ENCODE measurements at regions of chr1 and their contacts with region 1.

Region 1: DNA sequence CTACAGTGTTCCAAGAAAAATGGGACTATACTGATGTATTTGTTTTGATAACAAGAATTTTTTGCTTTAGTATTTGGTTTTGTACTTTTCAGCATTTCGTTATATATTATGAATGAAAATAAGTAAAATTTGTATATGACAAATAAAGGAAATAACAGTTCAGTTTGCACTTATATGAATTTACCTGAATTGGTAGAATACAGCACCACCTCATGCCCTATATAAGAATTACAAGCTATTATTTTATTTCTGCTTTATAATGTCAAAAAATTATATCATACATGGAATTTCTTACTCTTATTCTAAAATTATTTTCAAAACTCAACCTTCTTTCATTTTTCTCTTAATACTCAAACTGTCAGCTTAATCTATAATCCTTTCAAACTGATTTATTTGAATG is 14.6 kb downstream of the EFCAB7 start:
- DNase-seq: no peak
- ATAC-seq: no peak
- H3K4me3 ChIP-seq: no peak overlapping the region
- H3K27ac ChIP-seq: no peak overlapping the region
- H3K4me1 ChIP-seq: peaks cover 6% of the 10 kb centered on the region; the same call in 1 of the 2 replicates
- H3K27me3 ChIP-seq: no peaks in the 10 kb centered on the region
- CTCF ChIP-seq: no peak
- EP300 ChIP-seq: no peak
- POLR2A ChIP-seq: no peak
- RAD21 ChIP-seq: no peak

Region 2: GRCh38 chr1:62962901-62963776 is 574.8 kb before region 1 on chr1:
- CTCF ChIA-PET with region 1: no interaction called
- POLR2A ChIA-PET with region 1: no interaction called
- in situ Hi-C with region 1: no loop called
- intact Hi-C with region 1: loop called (anchors 5 kb)
- DNase-seq: peak; percentile 30
- ATAC-seq: peak; percentile 96
- H3K4me3 ChIP-seq: no peak overlapping the region
- H3K27ac ChIP-seq: no peak overlapping the region
- H3K4me1 ChIP-seq: no peaks in the 10 kb centered on the region
- H3K27me3 ChIP-seq: no peaks in the 10 kb centered on the region
- CTCF ChIP-seq: peak; percentile 79
- EP300 ChIP-seq: no peak
- POLR2A ChIP-seq: no peak
- RAD21 ChIP-seq: 0 out of 2 replicates have a peak, but pooled peaks have one; percentile 33

Region 3: GRCh38 chr1:63004868-63005267 is 533.1 kb before region 1 on chr1:
- CTCF ChIA-PET with region 1: no interaction called
- POLR2A ChIA-PET with region 1: no interaction called
- in situ Hi-C with region 1: loop called (anchors 25 kb)
- intact Hi-C with region 1: no loop called
- DNase-seq: peak; percentile 3
- ATAC-seq: peak; percentile 61; the same call in 2 of the 3 replicates
- H3K4me3 ChIP-seq: no peak overlapping the region
- H3K27ac ChIP-seq: no peak overlapping the region
- H3K4me1 ChIP-seq: no peaks in the 10 kb centered on the region
- H3K27me3 ChIP-seq: peaks cover 1 to 8% of the 10 kb centered on the region in 2 experiments; a peak in 3 of 5 replicates
- CTCF ChIP-seq: peak; percentile 61
- EP300 ChIP-seq: no peak
- POLR2A ChIP-seq: no peak
- RAD21 ChIP-seq: 0 out of 2 replicates have a peak, but pooled peaks have one; percentile 12

Region 4: GRCh38 chr1:63316984-63317816 is 220.7 kb before region 1 on chr1:
- CTCF ChIA-PET with region 1: interaction called, 5 read pairs
- POLR2A ChIA-PET with region 1: no interaction called
- in situ Hi-C with region 1: no loop called
- intact Hi-C with region 1: loop called (anchors 5 kb)
- DNase-seq: peak; percentile 41
- ATAC-seq: peak; percentile 95
- H3K4me3 ChIP-seq: peak overlapping the region; percentile 64 to 73 (median 67)
- H3K27ac ChIP-seq: no peak overlapping the region
- H3K4me1 ChIP-seq: peaks cover 8% of the 10 kb centered on the region; the same call in 1 of the 2 replicates
- H3K27me3 ChIP-seq: peaks cover 9 to 50% of the 10 kb centered on the region in 2 experiments
- CTCF ChIP-seq: peak; percentile 87
- EP300 ChIP-seq: no peak
- POLR2A ChIP-seq: no peak
- RAD21 ChIP-seq: peak; percentile 59; the same call in 1 of the 2 replicates

Region 5: GRCh38 chr1:63327417-63328139 is 210.4 kb before region 1 on chr1:
- CTCF ChIA-PET with region 1: no interaction called
- POLR2A ChIA-PET with region 1: no interaction called
- in situ Hi-C with region 1: loop called (anchors 5 kb)
- intact Hi-C with region 1: no loop called
- DNase-seq: peak; percentile 24
- ATAC-seq: peak; percentile 92
- H3K4me3 ChIP-seq: no peak overlapping the region
- H3K27ac ChIP-seq: no peak overlapping the region
- H3K4me1 ChIP-seq: peaks cover 22% of the 10 kb centered on the region
- H3K27me3 ChIP-seq: peaks cover 6 to 62% of the 10 kb centered on the region in 2 experiments
- CTCF ChIP-seq: peak; percentile 88
- EP300 ChIP-seq: no peak
- POLR2A ChIP-seq: no peak
- RAD21 ChIP-seq: peak; percentile 19; the same call in 1 of the 2 replicates

Region 6: DNA sequence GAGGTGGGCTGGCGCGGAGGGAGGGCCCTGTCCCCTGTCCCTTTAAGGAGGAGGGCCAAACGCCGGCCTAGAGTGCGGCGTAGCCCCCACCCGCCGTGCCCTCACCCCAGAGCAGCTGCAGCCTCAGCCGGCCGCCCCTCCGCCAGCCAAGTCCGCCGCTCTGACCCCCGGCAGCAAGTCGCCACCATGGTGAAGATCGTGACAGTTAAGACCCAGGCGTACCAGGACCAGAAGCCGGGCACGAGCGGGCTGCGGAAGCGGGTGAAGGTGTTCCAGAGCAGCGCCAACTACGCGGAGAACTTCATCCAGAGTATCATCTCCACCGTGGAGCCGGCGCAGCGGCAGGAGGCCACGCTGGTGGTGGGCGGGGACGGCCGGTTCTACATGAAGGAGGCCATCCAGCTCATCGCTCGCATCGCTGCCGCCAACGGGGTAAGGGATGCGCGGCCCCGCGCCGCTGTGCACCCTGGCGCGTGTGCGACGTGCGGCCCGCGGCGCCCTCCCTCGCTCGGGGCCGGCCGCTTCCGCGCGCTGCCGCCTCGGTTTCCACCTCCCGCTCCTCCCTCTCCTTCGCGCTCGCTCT is 55.5 kb after region 1 on chr1 and contains the start of gene PGM1:
- CTCF ChIA-PET with region 1: no interaction called
- POLR2A ChIA-PET with region 1: no interaction called
- in situ Hi-C with region 1: no loop called
- intact Hi-C with region 1: no loop called
- DNase-seq: peak; percentile 49
- ATAC-seq: peak; percentile 93
- H3K4me3 ChIP-seq: peak within 1 kb of the TSS; percentile 93 to 96 (median 93)
- H3K27ac ChIP-seq: peak within 1 kb of the TSS; percentile 94
- H3K4me1 ChIP-seq: peaks cover 68% of the 10 kb centered on the region
- H3K27me3 ChIP-seq: peaks cover 0 to 3% of the 10 kb centered on the region in 2 experiments; a peak in 1 of 5 replicates
- CTCF ChIP-seq: peak; percentile 16; the same call in 1 of the 2 replicates
- EP300 ChIP-seq: no peak
- POLR2A ChIP-seq: peak; percentile 40 to 75; a peak in 3 of 4 replicates
- RAD21 ChIP-seq: peak; percentile 12; the same call in 1 of the 2 replicates
- total RNA-seq, gene PGM1: 105 and 122 TPM in 2 replicates